Posterior cingulate gyrus (tissue), 11 donors: ENCODE measurements at regions of chr22 and their contacts with region 1.

Region 1: GRCh38 chr22:38766076-38766777 is 10.4 kb upstream of the SUN2 start:
- DNase-seq: peak; percentile 51 to 95 (median 73)

Region 2: GRCh38 chr22:38843201-38843715 is 77.0 kb after region 1 on chr22:
- intact Hi-C with region 1: loop called (anchors 5 kb)
- DNase-seq: peak in 2 of 10 donors; percentile 80 to 94

Region 3: DNA sequence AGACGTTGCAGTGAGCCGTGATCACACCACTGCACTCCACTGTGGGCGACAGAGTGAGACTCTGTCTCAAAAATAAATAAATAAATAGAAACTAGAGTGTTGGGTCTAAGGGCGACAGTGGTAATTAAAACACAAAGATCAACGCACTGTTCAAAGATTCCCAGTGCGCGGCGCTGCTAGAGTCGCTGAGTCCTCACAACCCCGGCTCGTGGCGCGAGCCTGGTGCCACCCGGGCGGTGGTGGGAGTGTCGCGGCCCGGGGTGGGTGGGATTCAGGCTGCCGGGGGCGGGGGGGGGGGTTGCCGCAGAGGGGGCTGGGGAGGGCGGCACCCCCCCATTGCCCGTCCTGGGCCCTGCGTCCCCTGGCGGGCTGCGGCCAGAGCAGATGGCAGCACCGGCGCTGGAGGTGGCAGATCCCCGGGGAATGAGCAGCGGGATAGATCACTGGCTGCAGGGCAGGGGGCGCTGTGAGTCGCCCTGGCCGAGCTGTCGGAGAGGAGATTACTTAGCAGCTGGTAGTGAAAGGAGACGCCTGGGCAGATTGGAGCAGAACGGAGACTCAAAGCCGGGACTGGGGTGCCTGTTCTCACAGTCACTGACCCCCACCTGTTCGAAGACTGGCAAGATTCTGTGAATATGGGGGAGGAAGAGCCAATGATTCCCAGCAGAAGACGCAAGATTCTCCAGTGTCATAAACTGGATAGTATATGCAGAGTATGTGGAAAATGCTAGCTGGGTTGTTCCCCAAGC is 161.0 kb after region 1 on chr22:
- intact Hi-C with region 1: loop called (anchors 5 kb)
- DNase-seq: peak; percentile 67 to 96 (median 78)

Region 4: GRCh38 chr22:39003165-39003638 is 237.0 kb after region 1 on chr22:
- intact Hi-C with region 1: loop called (anchors 5 kb)
- DNase-seq: peak in 7 of 10 donors; percentile 13 to 87 (median 50)

Region 5: GRCh38 chr22:39068033-39068791 is 302.0 kb after region 1 on chr22:
- intact Hi-C with region 1: no loop called
- DNase-seq: peak in 1 of 10 donors; percentile 8

Region 6: GRCh38 chr22:39123751-39124601 is 357.7 kb after region 1 on chr22:
- intact Hi-C with region 1: loop called (anchors 5 kb)
- DNase-seq: peak in 1 of 10 donors; percentile 59